H1 (cell line): ENCODE measurements at regions of chr3 and their contacts with region 1.

Region 1: GRCh38 chr3:13419505-13420044 is 547 bp downstream of the NUP210 start:
- DNase-seq: peak in 1 of 2 experiments; percentile 68
- H3K4me3 ChIP-seq: peak overlapping the region; percentile 55 to 85 (median 72)
- H3K27ac ChIP-seq: no peak overlapping the region; the same call in 1 of the 2 replicates
- H3K4me1 ChIP-seq: peaks cover 7 to 18% (median 12%) of the 10 kb centered on the region in 4 experiments
- H3K27me3 ChIP-seq: peaks cover 0 to 8% (median 0%) of the 10 kb centered on the region in 4 experiments; a peak in 4 of 7 replicates
- CTCF ChIP-seq: peak in 1 of 3 experiments; percentile 3; a peak in 1 of 4 replicates
- EP300 ChIP-seq: no peak
- POLR2A ChIP-seq: no peak
- RAD21 ChIP-seq: no peak

Region 2: GRCh38 chr3:13391308-13391707 is 28.3 kb before region 1 on chr3:
- CTCF ChIA-PET with region 1: interaction called, 14 read pairs
- POLR2A ChIA-PET with region 1: interaction called, 4 read pairs
- DNase-seq: no peak
- H3K4me3 ChIP-seq: no peak overlapping the region
- H3K27ac ChIP-seq: no peak overlapping the region
- H3K4me1 ChIP-seq: 0 out of 7 replicates have a peak, but pooled peaks cover 0 to 8% (median 0%) of the 10 kb centered on the region in 4 experiments
- H3K27me3 ChIP-seq: no peaks in the 10 kb centered on the region
- CTCF ChIP-seq: peak in 2 of 3 experiments; percentile 6 to 41; a peak in 3 of 4 replicates
- EP300 ChIP-seq: no peak
- POLR2A ChIP-seq: no peak
- RAD21 ChIP-seq: peak in 1 of 2 experiments; percentile 17; a peak in 1 of 4 replicates

Region 3: GRCh38 chr3:13401139-13401538 is 18.4 kb before region 1 on chr3:
- CTCF ChIA-PET with region 1: interaction called, 77 read pairs
- POLR2A ChIA-PET with region 1: interaction called, 5 read pairs
- DNase-seq: no peak
- H3K4me3 ChIP-seq: no peak overlapping the region
- H3K27ac ChIP-seq: no peak overlapping the region
- H3K4me1 ChIP-seq: peaks cover 0 to 3% (median 0%) of the 10 kb centered on the region in 4 experiments; a peak in 1 of 7 replicates
- H3K27me3 ChIP-seq: no peaks in the 10 kb centered on the region
- CTCF ChIP-seq: no peak
- EP300 ChIP-seq: no peak
- POLR2A ChIP-seq: no peak
- RAD21 ChIP-seq: no peak

Region 4: DNA sequence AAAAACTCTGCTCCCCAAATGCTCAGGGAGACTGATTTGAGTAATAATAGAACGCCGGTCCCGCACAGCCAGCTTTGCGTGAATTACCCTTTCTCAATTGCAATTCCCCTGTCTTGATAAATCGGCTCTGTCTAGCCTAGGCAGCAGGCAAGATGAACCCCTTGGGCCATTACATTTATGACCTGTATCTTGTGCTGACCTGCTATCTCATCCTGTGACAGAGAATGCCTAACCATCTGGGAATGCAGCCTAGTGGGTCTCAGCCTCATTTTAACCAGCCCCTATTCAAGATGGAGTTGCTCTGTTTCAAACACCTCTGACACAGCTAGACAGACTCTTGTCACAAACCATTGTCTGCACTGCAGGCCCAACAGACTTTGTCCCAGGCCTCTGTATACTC is 14.3 kb after region 1 on chr3:
- CTCF ChIA-PET with region 1: interaction called, 14 read pairs
- POLR2A ChIA-PET with region 1: interaction called, 4 read pairs
- DNase-seq: no peak
- H3K4me3 ChIP-seq: no peak overlapping the region
- H3K27ac ChIP-seq: no peak overlapping the region
- H3K4me1 ChIP-seq: peaks cover 0 to 6% (median 0%) of the 10 kb centered on the region in 4 experiments; a peak in 1 of 7 replicates
- H3K27me3 ChIP-seq: no peaks in the 10 kb centered on the region
- CTCF ChIP-seq: no peak
- EP300 ChIP-seq: no peak
- POLR2A ChIP-seq: no peak
- RAD21 ChIP-seq: no peak

Region 5: GRCh38 chr3:13461169-13462158 is 41.9 kb after region 1 on chr3:
- CTCF ChIA-PET with region 1: interaction called, 18 read pairs
- POLR2A ChIA-PET with region 1: interaction called, 3 read pairs
- DNase-seq: peak; percentile 90 to 97
- H3K4me3 ChIP-seq: no peak overlapping the region
- H3K27ac ChIP-seq: no peak overlapping the region
- H3K4me1 ChIP-seq: peaks cover 0 to 2% (median 0%) of the 10 kb centered on the region in 4 experiments; a peak in 2 of 7 replicates
- H3K27me3 ChIP-seq: peaks cover 3 to 10% (median 9%) of the 10 kb centered on the region in 4 experiments; a peak in 6 of 7 replicates
- CTCF ChIP-seq: peak; percentile 97 to 100 (median 99)
- EP300 ChIP-seq: 0 out of 3 replicates have a peak, but pooled peaks of 1 of the 2 experiments have one; percentile 20
- POLR2A ChIP-seq: no peak
- RAD21 ChIP-seq: peak; percentile 86 to 92